Upper lobe of right lung (tissue), 1 donor: ENCODE measurements at regions of chr5 and their contacts with region 1.

Region 1: DNA sequence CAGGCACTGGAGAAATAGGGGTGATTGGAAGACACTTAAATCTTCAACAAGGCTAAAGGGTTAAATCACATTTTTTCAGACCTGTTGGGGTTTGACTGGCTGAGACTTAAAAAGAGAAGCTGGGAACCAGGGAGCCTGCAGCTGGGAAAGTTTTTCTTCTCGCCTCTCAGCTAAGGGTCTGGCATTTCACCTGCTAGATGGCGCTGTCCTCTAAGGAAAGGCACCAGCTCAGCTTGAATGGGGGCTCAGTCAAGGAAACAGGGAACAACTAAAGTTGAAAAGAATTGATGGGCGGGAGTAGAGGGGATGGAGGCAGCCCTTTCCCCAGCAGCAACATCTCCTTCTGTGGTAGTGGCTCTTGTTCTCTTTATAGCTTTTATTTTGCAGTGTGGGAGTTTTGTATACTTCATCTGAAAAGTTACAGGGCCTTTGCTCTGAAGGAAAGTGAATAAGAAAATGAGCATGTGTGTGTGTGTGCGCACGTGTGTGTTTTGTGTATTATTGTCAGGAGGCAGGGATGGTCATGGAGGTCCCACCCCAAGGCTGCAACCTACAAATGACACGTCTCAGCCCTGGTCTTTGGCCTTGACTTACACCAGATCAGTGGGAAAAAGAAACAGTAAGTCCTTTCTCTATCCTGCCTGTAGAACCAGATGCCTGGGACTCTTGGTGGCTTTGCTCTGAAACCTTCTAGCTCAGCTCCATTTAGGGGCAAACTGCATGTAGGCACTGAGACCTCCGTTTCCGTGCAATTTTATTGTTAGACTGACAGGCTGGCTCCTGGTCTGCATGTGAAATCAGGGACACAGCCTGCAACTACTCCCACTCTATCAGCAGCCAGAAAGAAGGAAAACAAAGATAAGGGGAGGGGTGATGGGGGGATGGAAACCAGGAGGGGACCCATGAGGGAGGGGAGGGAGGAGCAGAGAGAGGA is 316.2 kb upstream of the CLINT1 start:
- DNase-seq: no peak
- ATAC-seq: peak; percentile 85
- H3K4me3 ChIP-seq: no peak overlapping the region
- H3K27ac ChIP-seq: no peak overlapping the region
- H3K4me1 ChIP-seq: peaks cover 4% of the 10 kb centered on the region
- H3K27me3 ChIP-seq: peaks cover 5% of the 10 kb centered on the region
- CTCF ChIP-seq: peak; percentile 75

Region 2: GRCh38 chr5:158682631-158683030 is 507.4 kb after region 1 on chr5:
- intact Hi-C with region 1: loop called (anchors 10 kb)
- DNase-seq: no peak
- ATAC-seq: no peak
- H3K4me3 ChIP-seq: no peak overlapping the region
- H3K27ac ChIP-seq: no peak overlapping the region
- H3K4me1 ChIP-seq: no peaks in the 10 kb centered on the region
- H3K27me3 ChIP-seq: peaks cover 9% of the 10 kb centered on the region
- CTCF ChIP-seq: no peak